OCI-LY7 (cell line): ENCODE measurements at regions of chr1 and their contacts with region 1.

Region 1: DNA sequence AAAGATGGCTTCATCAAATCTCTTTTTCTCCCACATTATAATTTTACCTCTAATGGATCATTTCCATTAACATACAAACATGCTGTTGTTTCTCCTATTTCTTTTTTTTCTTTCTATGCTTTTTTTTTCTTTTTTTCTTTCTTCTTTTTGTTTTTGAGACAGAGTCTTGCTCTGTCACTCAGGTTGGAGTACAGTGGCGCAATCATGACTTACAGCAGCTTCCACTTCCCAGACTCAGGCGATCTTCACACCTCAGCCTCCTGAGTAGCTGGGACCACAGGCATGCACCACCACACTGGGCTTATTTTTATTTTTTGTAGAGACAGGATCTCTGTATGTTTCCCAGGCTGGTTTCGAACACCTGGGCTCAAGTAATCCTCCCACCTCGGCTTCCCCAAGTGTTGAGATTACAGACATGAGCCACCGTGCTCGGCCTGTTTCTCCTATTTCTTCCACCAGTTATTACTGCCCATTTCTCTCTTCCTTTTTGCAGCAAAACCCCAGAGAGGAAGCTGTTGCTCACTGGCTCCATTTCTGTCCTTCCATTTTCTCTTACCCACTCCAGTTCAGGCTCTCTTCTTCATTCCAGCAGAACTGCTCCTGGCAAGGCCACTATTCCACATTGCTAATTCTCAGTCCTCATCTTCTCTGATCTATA is 32.1 kb upstream of the OPRD1 start:
- DNase-seq: no peak
- H3K4me3 ChIP-seq: no peak overlapping the region
- H3K27ac ChIP-seq: no peak overlapping the region
- H3K4me1 ChIP-seq: no peaks in the 10 kb centered on the region
- CTCF ChIP-seq: no peak

Region 2: GRCh38 chr1:28537457-28538199 is 242.3 kb before region 1 on chr1:
- CTCF ChIA-PET with region 1: no interaction called
- POLR2A ChIA-PET with region 1: no interaction called
- intact Hi-C with region 1: no loop called
- DNase-seq: no peak
- H3K4me3 ChIP-seq: no peak overlapping the region
- H3K27ac ChIP-seq: no peak overlapping the region
- H3K4me1 ChIP-seq: no peaks in the 10 kb centered on the region
- CTCF ChIP-seq: no peak

Region 3: GRCh38 chr1:28703629-28704028 is 76.3 kb before region 1 on chr1:
- CTCF ChIA-PET with region 1: no interaction called
- POLR2A ChIA-PET with region 1: no interaction called
- intact Hi-C with region 1: no loop called
- DNase-seq: no peak
- H3K4me3 ChIP-seq: no peak overlapping the region
- H3K27ac ChIP-seq: no peak overlapping the region
- H3K4me1 ChIP-seq: no peaks in the 10 kb centered on the region
- CTCF ChIP-seq: no peak

Region 4: GRCh38 chr1:28845786-28846543 is 66.1 kb after region 1 on chr1:
- CTCF ChIA-PET with region 1: no interaction called
- POLR2A ChIA-PET with region 1: no interaction called
- intact Hi-C with region 1: loop called (anchors 1 kb)
- DNase-seq: peak; percentile 50
- H3K4me3 ChIP-seq: no peak overlapping the region
- H3K27ac ChIP-seq: no peak overlapping the region
- H3K4me1 ChIP-seq: peaks cover 3% of the 10 kb centered on the region
- CTCF ChIP-seq: peak; percentile 64